Right ventricle myocardium inferior (tissue), 1 donor: ENCODE measurements at regions of chrX and their contacts with region 1.

Region 1: GRCh38 chrX:38220024-38220414 is 652 bp downstream of the SRPX start:
- DNase-seq: no peak
- ATAC-seq: peak; percentile 58

Region 2: DNA sequence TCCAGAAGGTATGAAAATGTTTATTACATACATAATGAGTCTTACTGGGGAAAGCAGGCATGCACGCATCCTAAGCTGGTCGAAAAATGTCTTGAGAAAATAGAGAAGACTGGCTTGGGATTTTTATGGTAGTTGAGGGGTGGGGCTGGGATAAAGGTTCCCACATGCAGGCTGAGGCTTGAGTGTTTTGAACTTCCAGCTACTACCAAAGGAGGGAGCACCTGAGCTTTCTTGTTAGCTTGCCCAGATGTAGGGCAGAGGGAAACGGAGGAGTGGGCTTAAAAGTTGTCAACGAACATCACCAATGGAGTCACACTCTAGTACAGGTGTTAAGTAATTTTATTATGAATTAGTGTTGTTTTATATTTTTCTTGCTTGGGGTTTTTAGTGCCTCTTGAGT is 40.2 kb after region 1 on chrX:
- intact Hi-C with region 1: loop called (anchors 5 kb)
- DNase-seq: no peak
- ATAC-seq: no peak

Region 3: GRCh38 chrX:38282044-38282443 is 62.0 kb after region 1 on chrX:
- intact Hi-C with region 1: no loop called
- DNase-seq: no peak
- ATAC-seq: peak; percentile 57

Region 4: GRCh38 chrX:38357747-38358673 is 138.0 kb after region 1 on chrX:
- intact Hi-C with region 1: no loop called
- DNase-seq: no peak
- ATAC-seq: no peak